ENCODE measurements at regions of chr6 and their contacts with region 1.

Region 1: GRCh38 chr6:139375232-139376016 is 976 bp upstream of the CITED2 start:
- DNase-seq: peak; percentile 88 to 96 (median 89)
- ATAC-seq: peak; percentile 74
- H3K4me3 ChIP-seq: peak overlapping the region; percentile 83
- H3K27ac ChIP-seq: peak overlapping the region; percentile 97
- H3K4me1 ChIP-seq: peaks cover 43 to 45% of the 10 kb centered on the region in 2 experiments
- H3K27me3 ChIP-seq: no peaks in the 10 kb centered on the region
- CTCF ChIP-seq: peak in 1 of 3 experiments; percentile 47; a peak in 1 of 6 replicates
- EP300 ChIP-seq: peak; percentile 51
- POLR2A ChIP-seq: peak; percentile 78
- RAD21 ChIP-seq: peak; percentile 65 to 72

Region 2: GRCh38 chr6:139386404-139386803 is 11.0 kb after region 1 on chr6:
- CTCF ChIA-PET with region 1: no interaction called
- POLR2A ChIA-PET with region 1: interaction called, 32 read pairs
- in situ Hi-C with region 1: no loop called
- intact Hi-C with region 1: no loop called
- DNase-seq: no peak
- ATAC-seq: no peak
- H3K4me3 ChIP-seq: no peak overlapping the region
- H3K27ac ChIP-seq: no peak overlapping the region
- H3K4me1 ChIP-seq: peaks cover 0 to under 1% of the 10 kb centered on the region in 2 experiments; a peak in 2 of 5 replicates
- H3K27me3 ChIP-seq: no peaks in the 10 kb centered on the region
- CTCF ChIP-seq: no peak
- EP300 ChIP-seq: no peak
- POLR2A ChIP-seq: no peak
- RAD21 ChIP-seq: no peak

Region 3: GRCh38 chr6:139474145-139475108 is 99.0 kb after region 1 on chr6:
- CTCF ChIA-PET with region 1: no interaction called
- POLR2A ChIA-PET with region 1: interaction called, 17 read pairs
- in situ Hi-C with region 1: no loop called
- intact Hi-C with region 1: no loop called
- DNase-seq: peak; percentile 31 to 63 (median 41)
- ATAC-seq: peak; percentile 48
- H3K4me3 ChIP-seq: peak overlapping the region; percentile 0; the same call in 1 of the 2 replicates
- H3K27ac ChIP-seq: peak overlapping the region; percentile 51
- H3K4me1 ChIP-seq: peaks cover 14 to 35% of the 10 kb centered on the region in 2 experiments
- H3K27me3 ChIP-seq: no peaks in the 10 kb centered on the region
- CTCF ChIP-seq: no peak
- EP300 ChIP-seq: peak; percentile 15
- POLR2A ChIP-seq: no peak
- RAD21 ChIP-seq: 0 out of 4 replicates have a peak, but pooled peaks have one; percentile 2 to 13

Region 4: GRCh38 chr6:139533573-139534471 is 158.4 kb after region 1 on chr6:
- CTCF ChIA-PET with region 1: no interaction called
- POLR2A ChIA-PET with region 1: interaction called, 33 read pairs
- in situ Hi-C with region 1: no loop called
- intact Hi-C with region 1: loop called (anchors 1 kb)
- DNase-seq: peak; percentile 70 to 95 (median 78)
- ATAC-seq: peak; percentile 94
- H3K4me3 ChIP-seq: 0 out of 2 replicates have a peak overlapping the region, but pooled peaks have one; percentile 5
- H3K27ac ChIP-seq: peak overlapping the region; percentile 70
- H3K4me1 ChIP-seq: peaks cover 10 to 44% of the 10 kb centered on the region in 2 experiments; a peak in 4 of 5 replicates
- H3K27me3 ChIP-seq: no peaks in the 10 kb centered on the region
- CTCF ChIP-seq: no peak
- EP300 ChIP-seq: peak; percentile 75
- POLR2A ChIP-seq: no peak; the same call in 1 of the 2 replicates
- RAD21 ChIP-seq: peak in 1 of 2 experiments; percentile 20; a peak in 1 of 4 replicates

Region 5: DNA sequence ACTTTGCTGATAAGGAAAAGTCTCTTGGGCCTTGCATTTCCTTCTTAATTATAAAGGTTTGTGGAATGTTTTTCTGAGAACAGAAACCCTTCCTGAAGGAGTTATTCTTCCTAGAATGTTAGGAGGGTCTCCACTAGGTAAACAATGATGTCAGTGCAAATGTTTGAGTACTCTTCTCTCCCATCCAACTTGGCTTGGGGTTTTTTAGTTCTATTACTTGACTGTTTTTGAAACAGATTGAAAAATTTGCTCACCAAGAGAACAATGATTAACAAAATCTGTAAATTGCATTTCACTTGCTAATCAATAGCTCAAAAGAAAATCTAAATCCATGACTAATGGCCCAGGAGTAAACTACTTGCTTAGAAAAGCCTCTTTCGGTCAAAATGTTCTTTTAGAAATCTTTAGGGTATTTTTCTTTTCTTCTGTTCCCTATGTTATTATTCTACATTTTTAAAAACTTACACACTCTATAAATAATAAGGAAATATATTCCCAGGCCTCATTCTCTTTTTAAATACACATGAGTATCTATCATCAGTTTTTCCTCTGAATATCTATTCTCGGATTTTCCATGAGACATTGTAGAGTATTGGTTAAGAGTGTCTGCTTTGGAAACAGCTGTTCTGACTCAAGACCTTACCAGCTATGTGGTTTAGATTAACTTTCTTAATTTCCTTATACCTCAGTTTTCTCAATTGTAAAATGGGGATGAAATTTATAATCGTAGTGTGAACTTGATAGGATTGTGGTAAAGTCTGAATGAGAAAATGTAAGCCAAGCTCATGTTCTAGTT is 233.2 kb after region 1 on chr6:
- CTCF ChIA-PET with region 1: interaction called, 3 read pairs
- POLR2A ChIA-PET with region 1: interaction called, 14 read pairs
- in situ Hi-C with region 1: no loop called
- intact Hi-C with region 1: loop called (anchors 10 kb)
- DNase-seq: no peak
- ATAC-seq: no peak
- H3K4me3 ChIP-seq: no peak overlapping the region
- H3K27ac ChIP-seq: no peak overlapping the region
- H3K4me1 ChIP-seq: peaks cover 0 to 15% of the 10 kb centered on the region in 2 experiments; a peak in 3 of 5 replicates
- H3K27me3 ChIP-seq: no peaks in the 10 kb centered on the region
- CTCF ChIP-seq: no peak
- EP300 ChIP-seq: no peak
- POLR2A ChIP-seq: no peak
- RAD21 ChIP-seq: no peak

Region 6: DNA sequence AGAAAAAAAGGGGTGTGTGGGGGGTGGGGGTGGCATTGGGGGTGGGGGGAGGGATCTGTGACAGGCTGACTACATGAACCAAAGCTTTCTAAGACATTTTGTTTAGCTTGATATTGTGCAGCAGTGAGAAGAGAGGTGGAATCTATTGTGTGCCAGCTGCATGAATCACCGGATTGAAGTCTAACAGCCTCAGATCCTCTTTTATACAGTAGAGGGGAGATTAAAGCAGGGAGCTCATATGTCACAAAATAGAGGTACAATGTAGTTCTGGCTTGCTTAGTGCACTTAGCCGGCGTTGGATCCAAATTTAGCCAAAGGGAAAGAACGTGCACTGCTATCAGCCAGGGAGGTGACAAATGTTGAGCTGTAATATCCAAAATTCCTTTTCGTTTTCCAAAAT is 403.3 kb after region 1 on chr6:
- CTCF ChIA-PET with region 1: no interaction called
- POLR2A ChIA-PET with region 1: interaction called, 16 read pairs
- in situ Hi-C with region 1: no loop called
- intact Hi-C with region 1: loop called (anchors 5 kb)
- DNase-seq: no peak
- ATAC-seq: no peak; the same call in 2 of the 3 replicates
- H3K4me3 ChIP-seq: no peak overlapping the region
- H3K27ac ChIP-seq: no peak overlapping the region
- H3K4me1 ChIP-seq: peaks cover 4 to 17% of the 10 kb centered on the region in 2 experiments; a peak in 3 of 5 replicates
- H3K27me3 ChIP-seq: no peaks in the 10 kb centered on the region
- CTCF ChIP-seq: no peak
- EP300 ChIP-seq: no peak
- POLR2A ChIP-seq: no peak
- RAD21 ChIP-seq: no peak

Region 7: DNA sequence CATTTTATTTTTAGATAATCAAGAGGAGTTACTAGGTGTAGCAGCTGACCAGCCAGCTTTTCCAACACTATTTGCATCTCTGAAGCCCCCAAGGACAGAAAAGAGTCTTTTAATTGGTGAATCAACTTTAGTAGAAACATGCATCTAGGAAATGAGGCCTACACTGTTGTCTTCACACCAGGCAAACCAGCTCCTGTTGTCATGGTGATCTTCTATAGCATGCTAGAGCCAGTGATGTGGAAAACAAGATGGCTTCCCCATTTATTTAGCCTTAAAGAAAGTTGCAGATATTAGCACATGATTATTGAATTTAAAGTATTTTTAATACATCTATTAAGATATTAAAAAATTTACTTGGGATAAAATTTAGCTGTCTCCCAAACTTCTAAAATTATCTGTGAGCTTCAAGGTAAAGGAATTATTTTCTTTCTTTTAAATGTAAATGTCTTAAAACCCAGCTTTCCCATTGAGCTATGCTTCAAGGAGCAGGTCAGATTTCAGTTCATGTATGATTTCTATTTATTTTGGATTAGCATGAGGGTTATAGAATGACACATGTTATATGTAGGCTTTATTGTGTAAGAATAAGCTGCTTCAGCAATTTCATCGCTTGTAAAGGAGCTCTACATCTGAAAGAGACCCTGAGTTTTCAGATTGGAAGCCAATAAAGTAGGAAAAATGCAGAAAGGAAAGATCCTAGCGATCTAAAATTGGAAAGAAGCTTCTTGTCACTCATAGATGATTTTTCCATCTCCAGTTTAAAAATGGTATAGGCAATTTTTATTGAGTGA is 564.0 kb after region 1 on chr6:
- CTCF ChIA-PET with region 1: no interaction called
- POLR2A ChIA-PET with region 1: interaction called, 13 read pairs
- in situ Hi-C with region 1: no loop called
- intact Hi-C with region 1: no loop called
- DNase-seq: peak in 2 of 4 experiments; percentile 31 to 42
- ATAC-seq: peak; percentile 46; the same call in 1 of the 3 replicates
- H3K4me3 ChIP-seq: no peak overlapping the region
- H3K27ac ChIP-seq: no peak overlapping the region
- H3K4me1 ChIP-seq: peaks cover 0 to 23% of the 10 kb centered on the region in 2 experiments; a peak in 2 of 5 replicates
- H3K27me3 ChIP-seq: no peaks in the 10 kb centered on the region
- CTCF ChIP-seq: no peak
- EP300 ChIP-seq: no peak
- POLR2A ChIP-seq: no peak
- RAD21 ChIP-seq: no peak

Measured in K562 (cell line).